SK-N-SH (cell line): ENCODE measurements at regions of chr14 and their contacts with region 1.

Region 1: GRCh38 chr14:67166450-67166853 is 22.8 kb upstream of the GARIN2 start:
- DNase-seq: peak; percentile 41
- H3K4me3 ChIP-seq: no peak overlapping the region; a peak in 1 of 4 replicates
- H3K27ac ChIP-seq: no peak overlapping the region
- H3K4me1 ChIP-seq: peaks cover 0 to 10% of the 10 kb centered on the region in 2 experiments; a peak in 1 of 4 replicates
- H3K27me3 ChIP-seq: no peaks in the 10 kb centered on the region
- CTCF ChIP-seq: peak; percentile 97
- EP300 ChIP-seq: no peak
- RAD21 ChIP-seq: peak; percentile 91

Region 2: DNA sequence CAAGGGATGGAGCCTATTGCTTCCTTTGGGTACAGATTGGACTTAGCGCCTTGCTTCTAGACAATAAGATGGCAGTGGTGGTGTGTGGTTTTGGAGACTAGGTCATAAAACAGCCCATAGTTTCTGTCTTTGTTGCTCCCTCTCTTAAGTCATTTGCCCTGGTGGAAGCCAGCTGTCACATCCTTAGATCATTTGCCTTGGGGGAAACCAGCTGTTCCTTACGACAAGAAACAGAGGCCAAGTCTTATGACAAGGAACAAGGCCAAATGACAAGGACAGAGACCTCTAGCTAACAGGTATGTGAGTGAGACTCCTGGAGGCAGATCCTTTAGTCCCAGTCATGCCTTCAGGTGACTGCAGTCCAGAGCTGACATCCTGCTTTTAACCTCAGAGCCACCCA is 65.6 kb after region 1 on chr14:
- CTCF ChIA-PET with region 1: interaction called, 11 read pairs
- POLR2A ChIA-PET with region 1: no interaction called
- DNase-seq: peak; percentile 34
- H3K4me3 ChIP-seq: no peak overlapping the region
- H3K27ac ChIP-seq: peak overlapping the region in 1 of 2 experiments; percentile 64; a peak in 2 of 4 replicates
- H3K4me1 ChIP-seq: peaks cover 0 to 13% of the 10 kb centered on the region in 2 experiments; a peak in 2 of 4 replicates
- H3K27me3 ChIP-seq: no peaks in the 10 kb centered on the region
- CTCF ChIP-seq: no peak
- EP300 ChIP-seq: no peak
- RAD21 ChIP-seq: no peak

Region 3: GRCh38 chr14:67276131-67276530 is 109.7 kb after region 1 on chr14:
- CTCF ChIA-PET with region 1: interaction called, 78 read pairs
- POLR2A ChIA-PET with region 1: no interaction called
- DNase-seq: no peak
- H3K4me3 ChIP-seq: no peak overlapping the region
- H3K27ac ChIP-seq: no peak overlapping the region
- H3K4me1 ChIP-seq: peaks cover 0 to 4% of the 10 kb centered on the region in 2 experiments; a peak in 3 of 4 replicates
- H3K27me3 ChIP-seq: no peaks in the 10 kb centered on the region
- CTCF ChIP-seq: no peak
- EP300 ChIP-seq: no peak
- RAD21 ChIP-seq: no peak